Activated T-helper 2 cell treated with anti-CD3 and anti-CD28 coated beads, Interferon-gamma antibody, Interleukin-2, Interleukin-4, amounts not matched to agents 10 μg/mL and 5 μg/mL and 100 μg/mL, durations not matched to agents 14 hours and 24 hours and 36 hours (primary cell): ENCODE measurements at regions of chr11 and their contacts with region 1.

Region 1: GRCh38 chr11:1852877-1853276 is at the start of gene LSP1:
- DNase-seq: peak; percentile 86
- H3K4me3 Mint-ChIP-seq: peak within 1 kb of the TSS; percentile 100
- H3K27ac Mint-ChIP-seq: peak within 1 kb of the TSS; percentile 99
- H3K4me1 Mint-ChIP-seq: peaks cover 32% of the 10 kb centered on the region
- H3K27me3 Mint-ChIP-seq: no peaks in the 10 kb centered on the region
- total RNA-seq, gene LSP1: 442 and 449 TPM in 2 replicates

Region 2: DNA sequence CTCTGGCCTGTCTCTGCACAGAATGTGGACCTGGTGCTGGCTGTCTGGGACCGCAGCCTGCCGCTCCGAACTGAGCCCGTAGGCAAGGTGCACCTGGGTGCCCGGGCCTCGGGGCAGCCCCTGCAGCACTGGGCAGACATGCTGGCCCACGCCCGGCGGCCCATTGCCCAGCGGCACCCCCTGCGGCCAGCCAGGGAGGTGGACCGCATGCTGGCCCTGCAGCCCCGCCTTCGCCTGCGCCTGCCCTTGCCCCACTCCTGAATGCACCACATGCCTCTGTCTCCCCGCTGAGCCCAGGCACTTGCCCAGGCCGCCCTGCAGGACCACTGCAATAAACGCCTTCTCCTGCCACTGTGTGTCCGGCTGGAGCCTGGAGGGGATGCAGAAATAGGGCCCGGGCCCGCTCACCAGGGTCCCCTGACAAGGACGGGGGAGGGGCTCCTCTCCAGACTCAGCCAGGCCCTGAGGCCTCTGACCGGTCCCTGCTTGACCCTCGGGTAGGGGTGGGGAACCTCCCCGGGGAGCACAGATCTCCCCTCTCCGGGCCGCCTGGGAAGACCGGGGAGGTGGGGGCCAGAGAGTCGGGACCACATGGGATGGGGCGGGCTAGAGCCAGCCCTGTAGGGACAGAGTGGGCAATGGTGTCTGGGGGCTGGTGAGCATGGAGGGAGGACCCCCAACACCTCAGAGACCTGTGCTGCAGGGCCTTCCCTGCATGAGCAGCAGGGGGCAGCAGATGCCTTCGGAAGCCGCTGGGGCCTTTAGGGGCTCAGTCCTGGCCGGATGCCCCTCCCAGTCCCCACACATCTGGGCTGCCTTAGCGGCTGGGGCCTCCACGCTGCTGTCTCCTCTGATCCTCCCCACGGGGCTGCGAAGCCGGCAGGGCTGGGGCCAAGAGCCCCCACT is 15.5 kb before region 1 on chr11:
- intact Hi-C with region 1: loop called (anchors 2 kb)
- DNase-seq: peak; percentile 67
- H3K4me3 Mint-ChIP-seq: no peak overlapping the region
- H3K27ac Mint-ChIP-seq: no peak overlapping the region
- H3K4me1 Mint-ChIP-seq: peaks cover 7% of the 10 kb centered on the region
- H3K27me3 Mint-ChIP-seq: peaks cover 2% of the 10 kb centered on the region

Region 3: GRCh38 chr11:1870721-1871466 is 18.0 kb after region 1 on chr11:
- intact Hi-C with region 1: loop called (anchors 2 kb)
- DNase-seq: no peak
- H3K4me3 Mint-ChIP-seq: no peak overlapping the region
- H3K27ac Mint-ChIP-seq: peak overlapping the region; percentile 58
- H3K4me1 Mint-ChIP-seq: peaks cover 21% of the 10 kb centered on the region
- H3K27me3 Mint-ChIP-seq: no peaks in the 10 kb centered on the region

Region 4: DNA sequence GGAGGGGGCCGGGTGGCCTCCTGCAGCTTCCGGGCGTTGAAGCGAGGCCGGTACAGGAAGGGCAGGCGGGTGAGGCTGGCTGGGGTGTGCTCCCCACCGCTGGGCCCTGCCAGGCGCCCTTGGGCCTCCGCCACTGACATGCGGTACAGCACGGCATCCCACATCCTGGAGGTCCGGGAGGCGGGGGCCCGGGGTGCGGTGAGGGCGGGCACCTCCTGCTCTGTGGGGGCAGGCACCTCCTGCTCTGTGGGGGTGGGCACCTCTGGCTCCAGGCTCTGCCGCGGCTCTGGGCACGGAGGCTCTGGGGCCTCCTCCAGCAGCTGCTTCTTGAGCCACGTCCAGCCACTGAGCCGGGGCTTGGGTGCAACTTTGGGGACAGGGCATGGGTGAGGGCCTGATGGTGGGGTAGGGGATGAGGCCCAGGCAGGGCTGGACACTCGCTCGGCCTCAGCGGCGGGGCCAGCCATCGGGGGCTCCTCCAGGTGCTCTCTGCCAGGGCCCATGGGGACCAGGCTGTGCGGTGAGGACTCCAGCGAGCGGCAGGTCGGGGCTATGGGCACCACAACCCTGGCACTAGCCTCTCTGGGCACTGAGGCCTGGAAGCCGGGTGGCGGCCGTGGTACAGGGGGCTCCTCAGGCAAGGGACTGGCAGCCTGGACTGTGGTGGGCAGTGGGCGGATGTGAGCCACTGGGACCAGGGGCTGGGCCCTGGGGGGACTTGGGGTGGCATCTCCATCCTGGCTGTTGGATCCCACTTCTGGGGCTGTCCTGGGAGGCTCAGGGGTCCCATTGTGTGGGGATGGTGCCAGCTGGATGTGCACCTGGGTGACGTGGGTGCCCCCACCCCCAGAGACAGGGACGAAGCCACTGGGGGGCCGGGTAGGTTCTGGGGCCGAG is 36.6 kb after region 1 on chr11:
- intact Hi-C with region 1: loop called (anchors 1 kb)
- DNase-seq: peak; percentile 76
- H3K4me3 Mint-ChIP-seq: peak overlapping the region; percentile 60
- H3K27ac Mint-ChIP-seq: peak overlapping the region; percentile 67
- H3K4me1 Mint-ChIP-seq: peaks cover 17% of the 10 kb centered on the region
- H3K27me3 Mint-ChIP-seq: no peaks in the 10 kb centered on the region

Region 5: GRCh38 chr11:2077061-2077802 is 224.4 kb after region 1 on chr11:
- intact Hi-C with region 1: loop called (anchors 1 kb)
- DNase-seq: no peak
- H3K4me3 Mint-ChIP-seq: no peak overlapping the region
- H3K27ac Mint-ChIP-seq: peak overlapping the region; percentile 84
- H3K4me1 Mint-ChIP-seq: peaks cover 23% of the 10 kb centered on the region
- H3K27me3 Mint-ChIP-seq: peaks cover 20% of the 10 kb centered on the region

Region 6: GRCh38 chr11:2142762-2143202 is 289.9 kb after region 1 on chr11:
- intact Hi-C with region 1: loop called (anchors 2 kb)
- DNase-seq: no peak
- H3K4me3 Mint-ChIP-seq: peak overlapping the region; percentile 42
- H3K27ac Mint-ChIP-seq: peak overlapping the region; percentile 82
- H3K4me1 Mint-ChIP-seq: peaks cover 14% of the 10 kb centered on the region
- H3K27me3 Mint-ChIP-seq: peaks cover 56% of the 10 kb centered on the region

Region 7: DNA sequence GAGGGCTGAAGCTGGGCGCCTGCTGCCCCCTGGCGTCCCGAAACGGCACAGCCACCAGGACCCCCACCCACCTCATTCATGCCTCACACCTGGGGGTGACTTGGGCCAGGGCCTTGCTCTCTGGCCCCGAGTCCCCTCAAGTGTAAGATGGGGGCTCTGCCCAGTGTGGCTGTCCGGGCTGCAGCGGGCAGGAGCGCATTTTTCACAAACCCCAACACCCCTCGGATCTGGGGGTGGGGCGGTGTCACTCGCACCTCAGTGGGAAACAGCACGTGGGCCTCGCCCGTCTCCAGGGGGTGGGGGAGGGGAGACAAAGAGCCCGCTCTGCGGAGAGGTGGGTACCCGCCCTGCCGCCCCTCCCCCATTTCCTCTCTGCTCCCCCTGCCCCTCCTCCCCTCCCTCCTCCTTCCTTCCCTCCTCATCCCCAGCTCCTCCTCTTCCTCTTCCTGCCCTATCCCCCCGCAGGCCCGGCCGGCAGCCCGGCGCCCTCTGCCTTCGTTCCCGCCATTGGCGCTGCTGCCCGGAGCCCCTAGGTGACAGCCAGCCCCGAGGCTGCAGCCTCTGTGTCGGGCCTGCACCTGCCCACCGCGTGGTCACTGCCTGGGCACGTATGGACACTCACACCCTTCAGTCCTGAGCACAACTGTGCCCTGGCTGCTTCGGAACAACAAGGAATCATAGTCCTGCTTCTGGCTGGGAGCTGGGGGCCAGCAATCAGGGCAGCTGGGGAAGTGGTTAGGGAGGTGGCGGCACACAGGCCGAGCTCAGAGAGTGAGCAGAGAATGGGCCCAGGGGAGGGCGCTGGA is 1039.5 kb after region 1 on chr11:
- intact Hi-C with region 1: loop called (anchors 2 kb)
- DNase-seq: peak; percentile 59
- H3K4me3 Mint-ChIP-seq: peak overlapping the region; percentile 83
- H3K27ac Mint-ChIP-seq: peak overlapping the region; percentile 72
- H3K4me1 Mint-ChIP-seq: peaks cover 9% of the 10 kb centered on the region
- H3K27me3 Mint-ChIP-seq: peaks cover under 1% of the 10 kb centered on the region